ENCODE measurements at regions of chr22 and their contacts with region 1.

Region 1: DNA sequence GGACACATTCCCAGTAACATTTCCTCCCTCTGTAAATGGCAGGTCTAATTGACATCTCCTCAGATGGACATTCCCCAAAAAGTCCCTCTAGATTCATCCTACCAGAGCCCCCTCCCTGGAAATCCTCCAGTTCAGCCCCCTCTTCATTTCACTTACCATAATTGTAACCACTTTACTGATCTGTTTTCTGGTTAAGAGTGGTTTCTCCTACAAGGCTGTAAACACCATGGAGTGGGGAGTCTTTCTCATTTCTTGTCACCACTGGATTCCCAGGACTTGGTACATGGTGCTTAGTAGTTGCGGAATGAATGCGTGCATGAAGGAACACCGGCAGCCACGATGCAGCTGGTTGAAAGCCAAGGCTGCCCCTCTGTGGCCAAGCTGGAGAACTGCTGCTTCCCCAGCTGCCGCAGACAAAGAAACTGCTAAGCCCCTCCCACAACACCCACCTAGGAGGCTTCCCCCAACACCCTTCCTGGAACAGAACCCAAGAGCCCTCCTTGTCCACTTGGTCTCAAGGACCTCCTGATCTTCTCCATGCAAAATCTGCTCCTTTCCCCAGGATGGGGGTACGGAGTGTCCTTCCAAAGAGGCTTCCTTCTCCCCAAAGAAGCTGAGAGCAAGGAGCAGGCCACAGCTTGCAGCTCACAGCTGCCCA is 18.6 kb upstream of the SCARF2 start:
- DNase-seq: peak; percentile 54 to 82 (median 72)
- ATAC-seq: peak; percentile 98
- H3K4me3 ChIP-seq: no peak overlapping the region
- H3K4me3 Mint-ChIP-seq: peak overlapping the region in 4 of 10 donors; percentile 20 to 36 (median 26)
- H3K27ac ChIP-seq: no peak overlapping the region
- H3K27ac Mint-ChIP-seq: peak overlapping the region in 5 of 9 donors; percentile 25 to 75 (median 51)
- H3K4me1 ChIP-seq: peaks cover 8 to 16% of the 10 kb centered on the region in 2 donors
- H3K4me1 Mint-ChIP-seq: peaks cover 13 to 40% (median 34%) of the 10 kb centered on the region in 7 donors
- H3K27me3 ChIP-seq: no peaks in the 10 kb centered on the region
- H3K27me3 Mint-ChIP-seq: no peaks in the 10 kb centered on the region

Region 2: GRCh38 chr22:20429254-20430100 is 26.7 kb before region 1 on chr22:
- CTCF ChIA-PET with region 1: interaction called, 5 read pairs
- POLR2A ChIA-PET with region 1: interaction called, 4 read pairs
- intact Hi-C with region 1: loop called in 1 of 2 experiments (anchors 1 kb)
- DNase-seq: peak; percentile 56 to 86 (median 75)
- ATAC-seq: peak; percentile 87
- H3K4me3 ChIP-seq: peak overlapping the region; percentile 79
- H3K4me3 Mint-ChIP-seq: peak overlapping the region; percentile 82 to 96 (median 86)
- H3K27ac ChIP-seq: no peak overlapping the region
- H3K27ac Mint-ChIP-seq: peak overlapping the region; percentile 11 to 80 (median 62)
- H3K4me1 ChIP-seq: peaks cover 17 to 26% of the 10 kb centered on the region in 2 donors
- H3K4me1 Mint-ChIP-seq: peaks cover 6 to 22% (median 13%) of the 10 kb centered on the region in 7 donors
- H3K27me3 ChIP-seq: peaks cover 0 to 12% of the 10 kb centered on the region in 2 donors
- H3K27me3 Mint-ChIP-seq: peaks cover 18 to 66% (median 22%) of the 10 kb centered on the region in 5 donors

Region 3: DNA sequence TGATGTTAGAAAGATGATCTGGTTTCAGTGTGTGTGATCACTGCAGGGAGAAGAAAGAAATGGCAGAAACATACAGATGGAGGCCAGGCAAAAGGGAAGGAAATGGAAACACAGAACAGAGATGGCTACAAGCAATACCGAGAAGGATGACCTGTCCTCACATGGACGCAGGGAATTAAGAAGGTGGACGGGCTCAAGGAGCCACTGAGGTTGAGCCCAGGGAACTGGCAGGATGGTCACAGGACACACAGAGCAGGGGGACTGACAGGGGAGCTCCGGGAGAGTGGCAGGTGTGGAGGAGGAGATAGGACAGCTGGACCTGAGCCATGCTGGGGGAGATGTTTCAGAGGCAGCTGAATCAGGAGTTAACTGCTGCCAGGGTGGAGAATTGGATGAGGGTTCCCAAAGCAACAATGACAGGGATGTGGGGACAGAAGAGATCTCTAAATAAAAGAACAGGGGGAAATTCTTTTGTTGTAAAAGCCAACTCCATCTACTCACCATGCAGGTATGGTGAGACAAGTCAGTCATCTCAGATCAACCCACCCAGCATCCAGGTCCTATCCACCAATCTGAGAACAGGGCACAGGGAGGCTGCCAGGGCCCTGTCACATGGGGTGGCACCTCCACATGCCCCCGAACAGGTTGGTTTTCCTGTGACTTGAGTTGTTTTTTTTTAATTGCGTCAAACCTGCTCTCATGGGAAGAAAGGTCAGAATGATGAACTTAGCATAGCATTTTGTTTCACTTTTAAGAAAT is 13.1 kb after region 1 on chr22:
- CTCF ChIA-PET with region 1: interaction called, 12 read pairs
- POLR2A ChIA-PET with region 1: interaction called, 25 read pairs
- intact Hi-C with region 1: loop called in 1 of 2 experiments (anchors 1 kb)
- DNase-seq: no peak
- ATAC-seq: no peak
- H3K4me3 ChIP-seq: no peak overlapping the region
- H3K4me3 Mint-ChIP-seq: peak overlapping the region in 4 of 10 donors; percentile 2 to 66 (median 26)
- H3K27ac ChIP-seq: no peak overlapping the region
- H3K27ac Mint-ChIP-seq: peak overlapping the region; percentile 1 to 99 (median 82)
- H3K4me1 ChIP-seq: peaks cover 16 to 31% of the 10 kb centered on the region in 2 donors
- H3K4me1 Mint-ChIP-seq: peaks cover 19 to 64% (median 45%) of the 10 kb centered on the region in 7 donors
- H3K27me3 ChIP-seq: no peaks in the 10 kb centered on the region
- H3K27me3 Mint-ChIP-seq: no peaks in the 10 kb centered on the region

Measured in naive thymus-derived CD4-positive, alpha-beta T cell (primary cell).